GM23248 (cell line): ENCODE measurements at regions of chr2 and their contacts with region 1.

Region 1: GRCh38 chr2:54115284-54116137 is at the start of gene ACYP2:
- DNase-seq: peak; percentile 96
- H3K4me3 ChIP-seq: peak within 1 kb of the TSS; percentile 89
- H3K27ac ChIP-seq: peak within 1 kb of the TSS; percentile 99
- H3K4me1 ChIP-seq: peaks cover 6% of the 10 kb centered on the region
- H3K27me3 ChIP-seq: no peaks in the 10 kb centered on the region
- total RNA-seq, gene ACYP2: 6.7 and 16.6 TPM in 2 replicates

Region 2: GRCh38 chr2:54015798-54016699 is 99.5 kb before region 1 on chr2:
- in situ Hi-C with region 1: no loop called
- DNase-seq: peak; percentile 93
- H3K4me3 ChIP-seq: no peak overlapping the region; the same call in 1 of the 2 replicates
- H3K27ac ChIP-seq: peak overlapping the region; percentile 74
- H3K4me1 ChIP-seq: peaks cover 17% of the 10 kb centered on the region
- H3K27me3 ChIP-seq: no peaks in the 10 kb centered on the region

Region 3: DNA sequence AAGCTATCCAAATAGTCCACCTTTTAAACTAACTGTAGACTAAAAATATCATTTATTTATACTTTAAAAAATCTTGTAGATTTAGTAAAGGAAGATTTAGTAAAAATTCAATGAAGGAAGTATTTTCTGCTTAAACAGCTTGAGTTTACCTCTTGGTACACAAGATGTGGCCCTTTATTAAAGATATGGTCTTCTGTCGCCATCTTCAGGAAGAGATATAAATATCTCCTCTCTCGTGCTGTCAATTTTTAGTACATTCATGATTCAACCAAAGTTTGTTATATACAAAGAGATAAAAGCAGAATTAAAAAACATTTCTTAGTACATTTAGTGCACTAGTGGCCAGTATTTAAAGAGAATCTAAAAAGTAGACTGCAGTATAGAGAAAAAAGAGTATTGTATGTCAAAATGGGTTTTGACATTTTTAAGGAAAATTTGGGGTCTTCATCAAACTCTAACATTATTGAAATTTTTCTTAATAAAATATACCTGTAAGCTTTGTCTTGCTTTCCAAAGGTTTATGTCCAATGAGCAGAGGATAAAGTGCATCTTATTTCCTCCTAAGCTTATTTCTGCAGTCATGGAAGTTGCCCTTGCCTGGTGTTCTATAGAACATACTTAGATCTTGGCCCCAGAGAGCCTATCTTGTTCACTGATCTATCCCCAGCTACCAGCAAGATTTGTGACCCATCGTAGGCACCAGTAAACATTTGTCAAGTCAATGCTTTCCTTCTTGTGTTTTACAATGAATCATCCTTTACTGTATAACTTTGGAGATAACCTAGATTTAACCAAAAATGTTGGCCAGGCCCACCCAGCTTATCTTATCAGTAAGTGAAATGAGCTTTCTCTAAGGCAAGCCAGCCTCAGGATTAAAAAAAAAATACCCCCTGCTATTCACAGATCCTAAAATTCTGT is 589.4 kb after region 1 on chr2:
- in situ Hi-C with region 1: loop called (anchors 10 kb)
- DNase-seq: peak; percentile 78
- H3K4me3 ChIP-seq: no peak overlapping the region
- H3K27ac ChIP-seq: no peak overlapping the region
- H3K4me1 ChIP-seq: no peaks in the 10 kb centered on the region
- H3K27me3 ChIP-seq: no peaks in the 10 kb centered on the region

Region 4: DNA sequence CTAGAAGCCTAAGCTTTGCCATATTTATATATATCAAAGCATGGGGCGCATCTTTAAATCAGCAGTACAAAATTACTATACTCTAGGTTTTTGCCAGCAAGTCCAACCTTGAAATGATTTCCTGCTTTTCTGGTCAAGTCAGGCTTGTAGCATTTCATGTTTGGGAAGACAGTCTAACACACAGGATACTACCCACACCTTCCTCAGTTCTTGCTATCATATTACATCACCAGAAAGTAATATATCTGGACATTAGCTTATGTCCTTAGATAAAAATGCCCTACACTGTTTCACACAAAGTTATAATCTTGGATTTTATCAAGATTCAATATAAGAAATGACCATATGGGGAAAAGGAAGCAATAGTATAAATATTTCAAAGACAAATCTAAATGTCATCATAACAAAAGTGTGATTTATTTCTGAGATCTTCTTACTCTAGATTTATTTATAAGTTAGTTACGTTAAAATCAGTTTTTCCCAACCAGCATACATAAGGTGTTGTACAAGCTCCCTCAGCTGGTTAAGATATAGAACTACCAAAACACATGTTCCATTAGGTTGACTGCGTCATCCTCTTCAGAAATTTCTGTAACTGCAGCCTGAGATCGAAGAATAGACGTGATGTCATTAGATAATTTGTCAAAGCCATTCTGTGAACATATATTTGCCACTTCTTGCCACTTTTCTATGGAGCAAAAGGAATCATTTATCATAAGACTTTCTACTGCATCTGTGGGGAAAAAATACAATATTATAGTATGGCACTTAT is 1059.9 kb after region 1 on chr2:
- in situ Hi-C with region 1: loop called (anchors 25 kb)
- DNase-seq: peak; percentile 93
- H3K4me3 ChIP-seq: no peak overlapping the region
- H3K27ac ChIP-seq: no peak overlapping the region
- H3K4me1 ChIP-seq: peaks cover 4% of the 10 kb centered on the region; the same call in 1 of the 2 replicates
- H3K27me3 ChIP-seq: no peaks in the 10 kb centered on the region